ENCODE measurements at regions of chr10 and their contacts with region 1.

Region 1: DNA sequence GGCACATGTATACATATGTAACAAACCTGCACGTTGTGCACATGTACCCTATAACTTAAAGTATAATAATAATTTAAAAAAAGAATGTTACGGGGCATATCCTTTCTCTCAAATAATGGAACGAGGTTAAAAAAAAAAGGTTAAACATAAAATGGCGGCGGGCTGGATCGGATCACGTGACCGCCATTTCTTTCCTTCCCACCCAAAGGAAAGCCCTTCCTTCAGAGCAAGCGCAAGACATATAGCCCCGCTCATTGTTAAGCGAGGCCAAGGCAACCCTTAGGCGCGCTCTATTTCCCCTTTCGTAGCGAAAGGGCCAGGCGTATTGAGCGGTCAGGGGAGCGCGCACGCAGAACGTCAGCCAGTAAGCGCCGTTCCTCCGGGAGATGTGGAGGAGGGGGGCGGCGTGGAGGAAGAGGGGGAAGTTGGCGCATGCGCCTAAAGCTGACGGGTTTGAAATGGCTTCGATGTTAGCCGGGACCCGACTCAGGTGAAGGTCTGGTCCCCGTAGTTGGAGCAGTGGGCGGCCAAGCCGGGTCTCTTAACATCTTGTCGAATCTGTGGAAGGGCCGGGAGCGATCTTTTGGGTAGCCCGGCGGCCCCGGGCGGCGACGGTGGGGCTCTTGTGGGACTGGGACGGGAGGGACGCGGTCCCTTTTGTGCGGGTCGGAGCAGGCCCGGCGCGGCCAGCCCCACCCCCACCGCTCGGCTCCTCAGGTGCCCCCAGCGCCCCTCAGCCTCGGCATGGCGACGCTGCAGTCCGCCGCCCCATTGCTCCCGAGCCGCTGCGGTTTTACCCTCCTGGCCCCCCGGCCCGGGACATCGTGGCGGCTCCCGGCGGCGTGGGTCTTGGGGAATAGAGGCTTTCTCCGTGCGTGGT is at the start of gene CCAR1:
- DNase-seq: peak; percentile 99
- ATAC-seq: peak; percentile 97
- H3K4me3 ChIP-seq: peak within 1 kb of the TSS; percentile 58 to 96 (median 93)
- H3K4me3 Mint-ChIP-seq: peak within 1 kb of the TSS; percentile 96
- H3K27ac ChIP-seq: peak within 1 kb of the TSS; percentile 81 to 95
- H3K27ac Mint-ChIP-seq: peak within 1 kb of the TSS; percentile 97
- H3K4me1 ChIP-seq: peaks cover 10 to 15% of the 10 kb centered on the region in 2 donors
- H3K4me1 Mint-ChIP-seq: peaks cover 17% of the 10 kb centered on the region
- H3K27me3 ChIP-seq: no peaks in the 10 kb centered on the region
- H3K27me3 Mint-ChIP-seq: no peaks in the 10 kb centered on the region
- CTCF ChIP-seq: no peak
- total RNA-seq, gene CCAR1: 98.9 and 101 TPM in 2 replicates

Region 2: GRCh38 chr10:68697106-68697505 is 23.9 kb before region 1 on chr10:
- CTCF ChIA-PET with region 1: no interaction called
- POLR2A ChIA-PET with region 1: no interaction called
- intact Hi-C with region 1: no loop called
- DNase-seq: no peak
- ATAC-seq: no peak
- H3K4me3 ChIP-seq: no peak overlapping the region
- H3K4me3 Mint-ChIP-seq: no peak overlapping the region
- H3K27ac ChIP-seq: no peak overlapping the region
- H3K27ac Mint-ChIP-seq: no peak overlapping the region
- H3K4me1 ChIP-seq: no peaks in the 10 kb centered on the region
- H3K4me1 Mint-ChIP-seq: no peaks in the 10 kb centered on the region
- H3K27me3 ChIP-seq: no peaks in the 10 kb centered on the region
- H3K27me3 Mint-ChIP-seq: no peaks in the 10 kb centered on the region
- CTCF ChIP-seq: no peak

Region 3: DNA sequence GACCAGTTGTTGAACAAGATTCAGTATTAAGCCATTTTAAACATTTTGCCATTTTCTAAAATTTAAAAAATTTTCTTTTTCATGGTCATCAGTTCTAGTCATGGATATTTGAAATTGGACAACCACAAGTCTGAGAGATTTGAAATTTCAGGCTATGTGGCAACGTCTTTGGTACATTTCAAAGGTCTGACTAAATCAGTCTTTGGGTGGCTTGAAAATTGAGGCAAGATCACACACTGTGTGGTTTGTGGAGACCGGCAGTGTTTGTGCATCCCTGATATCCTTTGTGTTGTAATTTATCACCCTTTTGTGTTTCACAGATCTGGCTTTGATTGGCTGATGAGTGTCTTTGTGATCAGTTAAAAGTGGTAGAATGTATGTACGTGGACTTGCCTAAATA is 35.7 kb after region 1 on chr10:
- CTCF ChIA-PET with region 1: no interaction called
- POLR2A ChIA-PET with region 1: no interaction called
- intact Hi-C with region 1: no loop called
- DNase-seq: no peak
- ATAC-seq: no peak
- H3K4me3 ChIP-seq: no peak overlapping the region
- H3K4me3 Mint-ChIP-seq: no peak overlapping the region
- H3K27ac ChIP-seq: no peak overlapping the region
- H3K27ac Mint-ChIP-seq: no peak overlapping the region
- H3K4me1 ChIP-seq: no peaks in the 10 kb centered on the region
- H3K4me1 Mint-ChIP-seq: no peaks in the 10 kb centered on the region
- H3K27me3 ChIP-seq: no peaks in the 10 kb centered on the region
- H3K27me3 Mint-ChIP-seq: no peaks in the 10 kb centered on the region
- CTCF ChIP-seq: no peak

Region 4: GRCh38 chr10:68826764-68827591 is 105.9 kb after region 1 on chr10 and contains the start of gene STOX1:
- CTCF ChIA-PET with region 1: no interaction called
- POLR2A ChIA-PET with region 1: no interaction called
- intact Hi-C with region 1: loop called (anchors 2 kb)
- DNase-seq: peak; percentile 74
- ATAC-seq: peak; percentile 70
- H3K4me3 ChIP-seq: peak within 1 kb of the TSS; percentile 40 to 66 (median 61)
- H3K4me3 Mint-ChIP-seq: peak within 1 kb of the TSS; percentile 83
- H3K27ac ChIP-seq: peak within 1 kb of the TSS in 1 of 2 donors; percentile 40
- H3K27ac Mint-ChIP-seq: no peak within 1 kb of the TSS
- H3K4me1 ChIP-seq: peaks cover 3 to 7% of the 10 kb centered on the region in 2 donors
- H3K4me1 Mint-ChIP-seq: peaks cover 5% of the 10 kb centered on the region
- H3K27me3 ChIP-seq: peaks cover 0 to 16% (median 0%) of the 10 kb centered on the region in 4 experiments
- H3K27me3 Mint-ChIP-seq: peaks cover 6% of the 10 kb centered on the region
- CTCF ChIP-seq: no peak
- total RNA-seq, gene STOX1: 0.53 and 0.57 TPM in 2 replicates